ENCODE measurements at regions of chr1 and their contacts with region 1.

Region 1: GRCh38 chr1:14259191-14259757 is 339.2 kb upstream of the KAZN start:
- DNase-seq: peak; percentile 69 to 97 (median 92)
- H3K4me3 ChIP-seq: peak overlapping the region in 9 of 59 donors; percentile 0 to 27 (median 10)
- H3K27ac ChIP-seq: peak overlapping the region; percentile 61 to 100 (median 96)
- H3K27me3 ChIP-seq: no peaks in the 10 kb centered on the region
- CTCF ChIP-seq: peak in 7 of 56 donors; percentile 3 to 35 (median 18)

Region 2: DNA sequence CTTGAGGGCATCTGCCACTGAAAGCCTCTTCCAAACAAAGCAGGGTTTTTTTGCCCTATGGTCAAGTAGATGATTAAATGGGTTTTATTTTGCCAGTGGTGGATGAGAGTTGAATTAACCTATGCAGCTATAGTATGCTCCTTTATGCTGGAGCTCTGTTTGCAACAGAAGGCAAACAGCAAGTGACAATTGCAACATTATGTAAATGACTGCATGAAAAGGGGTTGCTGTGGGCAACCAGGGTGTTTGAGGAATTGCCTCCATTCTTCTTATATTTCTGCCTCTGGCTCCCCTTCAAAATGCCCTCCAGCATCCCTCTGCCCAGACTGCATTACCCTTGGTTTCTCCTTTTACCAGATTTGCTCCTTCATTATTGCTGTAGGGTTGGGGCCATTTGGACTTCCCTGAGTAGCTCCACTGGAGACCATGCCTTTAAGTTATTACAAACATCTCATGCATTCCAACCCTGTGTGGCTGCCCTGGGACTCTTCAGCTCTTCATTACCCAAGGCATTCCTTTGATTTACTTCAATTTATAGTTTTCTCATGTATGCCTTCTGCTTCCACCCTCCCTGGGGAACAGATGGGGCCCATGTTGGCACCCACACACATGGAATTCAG is 160.9 kb before region 1 on chr1:
- intact Hi-C with region 1: no loop called
- DNase-seq: no peak
- H3K4me3 ChIP-seq: no peak overlapping the region
- H3K27ac ChIP-seq: no peak overlapping the region
- H3K27me3 ChIP-seq: no peaks in the 10 kb centered on the region
- CTCF ChIP-seq: no peak

Region 3: GRCh38 chr1:14415395-14415794 is 156.1 kb after region 1 on chr1:
- intact Hi-C with region 1: loop called (anchors 5 to 10 kb)
- DNase-seq: no peak
- H3K4me3 ChIP-seq: no peak overlapping the region
- H3K27ac ChIP-seq: peak overlapping the region in 1 of 59 donors; percentile 27
- H3K27me3 ChIP-seq: no peaks in the 10 kb centered on the region
- CTCF ChIP-seq: peak in 8 of 56 donors; percentile 5 to 15 (median 11)